OCI-LY7 (cell line): ENCODE measurements at regions of chr4 and their contacts with region 1.

Region 1: DNA sequence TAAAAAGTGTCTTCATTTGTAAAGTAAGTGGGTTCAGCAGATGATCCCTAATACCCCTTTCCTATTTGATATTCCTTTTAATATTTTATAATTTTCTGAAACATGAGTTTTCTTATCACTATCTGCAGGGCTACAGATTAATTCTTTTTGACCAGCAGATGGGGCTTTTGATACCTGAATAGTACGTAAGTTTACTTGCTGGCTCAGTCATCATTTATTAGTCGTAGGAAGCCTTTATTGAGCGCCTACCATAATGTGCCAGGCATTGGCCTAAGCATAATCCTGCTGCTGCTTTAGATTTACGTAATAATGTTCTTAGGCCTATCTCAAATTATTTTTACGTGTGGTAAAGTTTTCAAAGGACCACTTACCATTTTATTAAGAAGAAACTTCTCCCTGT is 33.1 kb downstream of the OSTC start:
- DNase-seq: peak; percentile 40
- H3K4me3 ChIP-seq: no peak overlapping the region
- H3K27ac ChIP-seq: no peak overlapping the region
- H3K4me1 ChIP-seq: no peaks in the 10 kb centered on the region
- CTCF ChIP-seq: peak; percentile 77

Region 2: DNA sequence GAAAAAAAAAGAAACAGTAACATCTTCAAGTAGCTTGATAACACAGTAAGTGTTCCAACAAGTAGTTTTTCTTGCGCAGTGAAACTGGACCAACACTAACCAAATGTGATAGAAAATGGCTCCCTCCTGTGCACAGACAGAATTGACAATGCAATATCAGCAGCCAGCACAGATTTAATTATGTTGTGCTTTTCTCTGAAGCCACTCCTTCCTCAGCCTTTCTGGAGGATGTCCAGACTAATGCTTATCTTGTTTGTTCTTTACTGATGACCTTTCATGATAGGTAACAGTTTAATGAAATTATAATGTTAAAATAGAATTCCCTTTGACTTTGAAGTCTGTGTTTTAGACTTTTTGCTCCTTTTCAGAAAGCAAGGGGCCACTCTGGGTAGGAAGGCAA is 210.3 kb before region 1 on chr4:
- CTCF ChIA-PET with region 1: no interaction called
- POLR2A ChIA-PET with region 1: no interaction called
- intact Hi-C with region 1: no loop called
- DNase-seq: no peak
- H3K4me3 ChIP-seq: no peak overlapping the region
- H3K27ac ChIP-seq: no peak overlapping the region
- H3K4me1 ChIP-seq: no peaks in the 10 kb centered on the region
- CTCF ChIP-seq: no peak

Region 3: GRCh38 chr4:108906006-108906405 is 222.5 kb after region 1 on chr4:
- CTCF ChIA-PET with region 1: no interaction called
- POLR2A ChIA-PET with region 1: interaction called, 10 read pairs
- intact Hi-C with region 1: no loop called
- DNase-seq: no peak
- H3K4me3 ChIP-seq: no peak overlapping the region
- H3K27ac ChIP-seq: no peak overlapping the region
- H3K4me1 ChIP-seq: no peaks in the 10 kb centered on the region
- CTCF ChIP-seq: no peak

Region 4: GRCh38 chr4:109294006-109294405 is 610.5 kb after region 1 on chr4:
- CTCF ChIA-PET with region 1: no interaction called
- POLR2A ChIA-PET with region 1: interaction called, 4 read pairs
- intact Hi-C with region 1: loop called (anchors 10 kb)
- DNase-seq: peak; percentile 54
- H3K4me3 ChIP-seq: no peak overlapping the region
- H3K27ac ChIP-seq: no peak overlapping the region
- H3K4me1 ChIP-seq: no peaks in the 10 kb centered on the region
- CTCF ChIP-seq: peak; percentile 80

Region 5: GRCh38 chr4:109406338-109406931 is 723.0 kb after region 1 on chr4:
- CTCF ChIA-PET with region 1: no interaction called
- POLR2A ChIA-PET with region 1: no interaction called
- intact Hi-C with region 1: loop called (anchors 10 kb)
- DNase-seq: peak; percentile 67
- H3K4me3 ChIP-seq: no peak overlapping the region
- H3K27ac ChIP-seq: no peak overlapping the region
- H3K4me1 ChIP-seq: no peaks in the 10 kb centered on the region
- CTCF ChIP-seq: peak; percentile 93